Testis (tissue), 5 donors: ENCODE measurements at regions of chr2 and their contacts with region 1.

Region 1: DNA sequence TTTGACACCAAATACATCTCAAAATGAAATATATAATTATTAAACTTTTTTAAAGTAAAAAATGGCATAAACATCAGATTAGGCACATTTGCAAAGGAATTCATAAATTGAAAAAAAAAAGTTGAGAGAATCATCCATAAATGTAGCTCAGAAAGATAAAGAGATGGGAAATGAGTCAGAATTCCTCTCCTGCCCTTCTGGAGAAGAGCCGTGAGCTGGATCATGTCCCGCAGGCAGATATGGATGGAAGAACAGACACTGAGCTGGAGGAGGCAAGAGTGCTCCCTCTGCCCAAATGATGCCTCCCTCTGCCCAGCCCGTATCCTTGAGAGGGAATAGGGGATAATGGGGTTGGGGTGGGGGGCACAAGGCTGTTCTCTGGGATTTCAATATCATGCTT is 190.9 kb downstream of the TFCP2L1 start:
- DNase-seq: no peak
- H3K4me3 ChIP-seq: no peak overlapping the region
- H3K27ac ChIP-seq: no peak overlapping the region
- H3K4me1 ChIP-seq: no peaks in the 10 kb centered on the region
- H3K27me3 ChIP-seq: no peaks in the 10 kb centered on the region
- CTCF ChIP-seq: no peak
- POLR2A ChIP-seq: no peak

Region 2: DNA sequence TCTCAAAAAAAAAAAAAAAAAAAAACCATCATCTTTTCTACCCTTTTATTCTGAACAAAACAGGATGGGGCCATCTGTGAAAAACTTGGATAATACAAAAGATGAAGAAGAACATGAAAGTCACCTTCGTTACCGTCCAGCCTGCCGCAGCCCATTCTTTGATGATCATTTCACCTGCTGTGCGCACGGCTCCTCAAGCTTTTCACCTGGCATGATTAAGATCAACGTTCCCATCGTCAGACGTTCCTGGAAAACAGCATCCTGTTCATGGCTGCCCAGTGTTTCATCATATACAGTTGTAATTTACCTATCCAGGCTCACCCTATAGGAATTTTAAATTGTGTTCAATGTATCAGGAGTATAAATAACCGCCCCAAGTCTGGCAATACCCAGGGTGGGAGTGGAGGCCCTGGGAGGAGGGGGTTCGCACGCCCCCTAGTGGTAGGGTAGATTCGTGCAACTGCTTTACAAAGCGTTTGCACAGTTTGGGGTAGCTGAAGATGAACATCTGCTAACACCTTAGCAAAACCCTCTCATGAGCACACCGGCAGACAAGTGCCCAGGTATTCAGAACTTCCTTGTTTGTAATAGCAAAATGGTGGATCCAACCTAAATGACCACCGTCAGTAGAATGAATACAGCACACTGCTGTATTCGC is 407.5 kb before region 1 on chr2:
- intact Hi-C with region 1: no loop called
- DNase-seq: no peak
- H3K4me3 ChIP-seq: no peak overlapping the region
- H3K27ac ChIP-seq: no peak overlapping the region
- H3K4me1 ChIP-seq: no peaks in the 10 kb centered on the region
- H3K27me3 ChIP-seq: no peaks in the 10 kb centered on the region
- CTCF ChIP-seq: no peak
- POLR2A ChIP-seq: no peak

Region 3: DNA sequence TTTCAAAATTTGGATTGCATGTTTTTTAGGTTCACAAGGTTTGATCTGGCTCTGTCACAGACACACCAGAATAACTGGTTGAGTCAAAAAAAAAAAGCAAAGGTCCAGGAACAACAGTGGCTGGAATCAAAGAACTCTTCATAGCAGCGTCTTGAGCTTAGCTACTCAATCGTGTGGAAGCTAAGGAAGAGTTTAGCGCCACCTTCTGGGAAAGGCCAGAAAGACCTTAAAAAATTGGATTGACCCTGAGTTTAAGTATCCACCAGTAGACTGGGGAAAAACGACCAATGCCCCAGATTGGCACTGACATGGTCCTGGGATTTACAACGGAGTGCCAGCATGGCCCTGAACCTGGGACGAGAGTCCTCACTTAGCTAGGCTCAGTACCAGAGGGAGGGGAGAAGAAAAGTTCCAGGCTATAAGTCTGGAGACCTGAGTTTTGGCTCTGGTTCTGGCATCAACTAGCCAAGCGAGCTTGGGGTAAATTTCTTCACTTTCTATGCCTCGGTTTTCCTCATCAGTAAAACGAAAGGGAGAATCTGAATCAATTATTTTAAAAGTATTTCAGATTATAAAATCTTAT is 262.0 kb after region 1 on chr2:
- intact Hi-C with region 1: loop called (anchors 5 kb)
- DNase-seq: peak; percentile 68
- H3K4me3 ChIP-seq: no peak overlapping the region
- H3K27ac ChIP-seq: no peak overlapping the region
- H3K4me1 ChIP-seq: peaks cover 2% of the 10 kb centered on the region
- H3K27me3 ChIP-seq: no peaks in the 10 kb centered on the region
- CTCF ChIP-seq: peak; percentile 43 to 64 (median 57)
- POLR2A ChIP-seq: no peak